ENCODE measurements at regions of chr9 and their contacts with region 1.

Region 1: DNA sequence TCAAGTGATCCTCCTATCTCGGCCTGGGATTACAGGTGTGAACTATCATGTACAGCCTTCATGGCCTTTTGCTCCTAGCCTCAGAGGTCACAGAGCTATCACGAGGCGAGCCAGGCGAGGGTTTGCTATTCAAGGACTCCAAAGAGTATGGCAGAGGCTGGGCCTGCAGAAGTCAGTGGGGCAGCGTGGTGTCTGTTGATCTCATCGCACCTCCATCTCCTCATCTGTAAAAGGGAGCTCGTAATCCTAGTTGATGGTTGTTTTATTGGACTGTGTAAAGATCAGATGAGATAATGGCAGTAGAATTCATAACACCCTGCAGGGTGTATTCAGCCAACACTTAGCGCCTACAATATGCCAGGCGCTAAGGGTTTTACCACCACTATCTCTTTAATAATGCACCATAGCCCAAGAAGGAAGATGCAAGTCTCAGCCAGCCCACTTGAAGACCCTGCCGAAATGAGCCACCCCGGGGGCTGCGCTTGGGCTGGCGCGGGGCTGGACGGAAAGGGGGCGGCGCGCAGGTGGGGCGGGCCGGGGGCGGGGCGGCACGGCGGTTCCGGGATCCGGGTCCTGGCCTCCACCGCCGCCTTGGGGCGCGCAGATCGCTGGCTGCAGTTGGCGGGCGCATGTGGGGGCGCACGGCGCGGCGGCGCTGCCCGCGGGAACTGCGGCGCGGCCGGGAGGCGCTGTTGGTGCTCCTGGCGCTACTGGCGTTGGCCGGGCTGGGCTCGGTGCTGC is at the start of gene GALNT12:
- DNase-seq: no peak
- ATAC-seq: peak; percentile 20
- H3K4me3 ChIP-seq: peak within 1 kb of the TSS; percentile 87
- H3K27ac ChIP-seq: peak within 1 kb of the TSS; percentile 80
- H3K4me1 ChIP-seq: peaks cover 56% of the 10 kb centered on the region
- H3K27me3 ChIP-seq: no peaks in the 10 kb centered on the region
- CTCF ChIP-seq: no peak
- total RNA-seq, gene GALNT12: 14.8 and 24.8 TPM in 2 replicates

Region 2: GRCh38 chr9:98848450-98849149 is 41.4 kb after region 1 on chr9:
- CTCF ChIA-PET with region 1: interaction called, 10 read pairs
- POLR2A ChIA-PET with region 1: no interaction called
- intact Hi-C with region 1: loop called (anchors 1 kb)
- DNase-seq: peak; percentile 96
- ATAC-seq: peak; percentile 96
- H3K4me3 ChIP-seq: no peak overlapping the region
- H3K27ac ChIP-seq: peak overlapping the region; percentile 81
- H3K4me1 ChIP-seq: peaks cover 26% of the 10 kb centered on the region
- H3K27me3 ChIP-seq: no peaks in the 10 kb centered on the region
- CTCF ChIP-seq: peak; percentile 83

Region 3: GRCh38 chr9:99019790-99020331 is 212.6 kb after region 1 on chr9:
- CTCF ChIA-PET with region 1: no interaction called
- POLR2A ChIA-PET with region 1: no interaction called
- intact Hi-C with region 1: no loop called
- DNase-seq: peak; percentile 85
- ATAC-seq: peak; percentile 93
- H3K4me3 ChIP-seq: no peak overlapping the region
- H3K27ac ChIP-seq: peak overlapping the region; percentile 93
- H3K4me1 ChIP-seq: peaks cover 19% of the 10 kb centered on the region
- H3K27me3 ChIP-seq: no peaks in the 10 kb centered on the region
- CTCF ChIP-seq: no peak

Measured in PC-3 (cell line).